BJ (cell line): ENCODE measurements at regions of chr17 and their contacts with region 1.

Region 1: DNA sequence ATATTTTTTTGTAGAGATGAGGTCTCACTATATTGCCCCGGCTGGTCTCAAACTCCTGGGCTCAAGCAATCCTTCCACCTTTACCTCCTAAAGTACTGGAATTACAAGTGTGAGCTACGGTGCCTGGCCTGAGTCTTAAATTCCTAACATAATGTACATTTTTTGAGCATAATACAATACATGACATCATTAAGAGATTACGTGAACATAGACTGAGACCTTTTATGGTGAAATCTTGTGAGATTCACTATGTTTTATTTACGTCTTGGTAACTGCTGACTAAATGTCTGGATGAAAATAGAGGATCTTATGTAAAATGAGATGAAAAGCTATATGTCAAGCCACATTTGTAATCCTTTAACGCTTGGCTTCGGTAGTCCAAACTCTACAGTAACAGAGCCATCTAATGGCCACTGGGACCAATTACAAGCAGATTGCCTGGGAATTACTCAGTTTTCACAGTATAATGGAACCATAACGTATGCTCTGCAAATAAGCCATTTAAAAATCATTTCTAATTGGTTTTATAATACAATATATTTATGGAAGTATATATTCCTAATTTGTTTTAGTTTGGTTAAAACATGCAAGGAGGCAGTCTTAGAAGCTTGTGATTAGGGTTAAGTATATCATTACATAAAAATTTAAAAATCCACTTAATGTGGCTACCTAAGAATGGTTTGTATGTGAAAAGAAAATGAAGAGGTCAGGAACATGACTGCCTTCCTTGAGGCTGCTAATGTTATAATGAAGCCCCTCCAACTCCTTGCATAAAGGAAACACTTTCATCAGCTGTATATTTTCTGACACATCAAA is 8.1 kb upstream of the EFCAB13 start:
- DNase-seq: no peak
- H3K4me3 ChIP-seq: no peak overlapping the region
- H3K27me3 ChIP-seq: no peaks in the 10 kb centered on the region
- CTCF ChIP-seq: peak; percentile 71

Region 2: DNA sequence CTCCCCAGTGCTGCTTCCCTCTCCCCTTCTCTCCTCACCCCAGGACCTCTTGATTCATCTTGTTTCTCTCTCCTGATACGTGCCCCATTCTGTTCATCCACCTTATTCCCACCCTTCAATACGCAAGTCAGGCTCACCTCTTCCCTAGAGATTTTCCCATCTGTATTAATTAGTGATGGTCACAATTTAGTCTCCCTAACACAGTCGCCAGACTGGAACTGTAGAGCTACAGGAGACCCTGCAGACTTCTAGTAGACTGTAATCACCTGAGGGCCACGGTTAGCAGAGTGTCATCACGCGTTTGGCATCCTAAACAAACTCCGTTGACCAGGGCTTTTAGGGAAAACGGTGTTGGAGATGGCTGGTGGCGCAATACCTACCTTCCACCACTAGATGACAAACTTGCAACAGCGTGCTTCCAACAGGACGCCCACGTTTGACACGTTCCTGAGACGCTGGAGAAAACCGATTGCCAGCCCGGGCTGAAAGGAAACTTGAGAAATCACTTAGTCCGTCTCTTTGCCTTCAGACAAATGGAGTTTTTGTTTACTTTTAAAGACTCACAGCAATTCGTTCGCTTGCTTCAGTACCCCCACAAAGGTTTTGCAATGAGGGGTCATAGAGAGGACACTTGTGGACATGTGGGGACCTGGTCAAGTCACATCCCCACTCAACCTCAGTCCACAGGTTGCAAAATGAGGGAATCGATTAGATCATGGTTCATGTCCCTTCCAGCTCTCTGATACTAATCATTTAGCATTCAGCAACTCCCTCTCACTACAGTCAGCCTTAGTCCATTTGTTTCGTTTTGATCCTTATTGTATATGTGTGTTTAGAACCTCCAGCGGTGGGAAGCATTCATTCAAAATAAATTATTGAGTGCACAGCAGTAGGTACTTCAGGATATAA is 85.9 kb before region 1 on chr17:
- CTCF ChIA-PET with region 1: interaction called, 26 read pairs
- POLR2A ChIA-PET with region 1: no interaction called
- DNase-seq: peak; percentile 64
- H3K4me3 ChIP-seq: no peak overlapping the region
- H3K27me3 ChIP-seq: no peaks in the 10 kb centered on the region
- CTCF ChIP-seq: peak; percentile 99

Region 3: GRCh38 chr17:47239619-47240374 is 75.9 kb before region 1 on chr17:
- CTCF ChIA-PET with region 1: interaction called, 12 read pairs
- POLR2A ChIA-PET with region 1: no interaction called
- DNase-seq: peak; percentile 85
- H3K4me3 ChIP-seq: no peak overlapping the region
- H3K27me3 ChIP-seq: no peaks in the 10 kb centered on the region
- CTCF ChIP-seq: no peak

Region 4: GRCh38 chr17:47305302-47305923 is 10.2 kb before region 1 on chr17:
- CTCF ChIA-PET with region 1: interaction called, 13 read pairs
- POLR2A ChIA-PET with region 1: interaction called, 3 read pairs
- DNase-seq: peak; percentile 89
- H3K4me3 ChIP-seq: no peak overlapping the region
- H3K27me3 ChIP-seq: no peaks in the 10 kb centered on the region
- CTCF ChIP-seq: no peak

Region 5: GRCh38 chr17:47368262-47368661 is 52.6 kb after region 1 on chr17:
- CTCF ChIA-PET with region 1: no interaction called
- POLR2A ChIA-PET with region 1: no interaction called
- DNase-seq: no peak
- H3K4me3 ChIP-seq: no peak overlapping the region
- H3K27me3 ChIP-seq: no peaks in the 10 kb centered on the region
- CTCF ChIP-seq: no peak